ENCODE measurements at regions of chr1 and their contacts with region 1.

Region 1: DNA sequence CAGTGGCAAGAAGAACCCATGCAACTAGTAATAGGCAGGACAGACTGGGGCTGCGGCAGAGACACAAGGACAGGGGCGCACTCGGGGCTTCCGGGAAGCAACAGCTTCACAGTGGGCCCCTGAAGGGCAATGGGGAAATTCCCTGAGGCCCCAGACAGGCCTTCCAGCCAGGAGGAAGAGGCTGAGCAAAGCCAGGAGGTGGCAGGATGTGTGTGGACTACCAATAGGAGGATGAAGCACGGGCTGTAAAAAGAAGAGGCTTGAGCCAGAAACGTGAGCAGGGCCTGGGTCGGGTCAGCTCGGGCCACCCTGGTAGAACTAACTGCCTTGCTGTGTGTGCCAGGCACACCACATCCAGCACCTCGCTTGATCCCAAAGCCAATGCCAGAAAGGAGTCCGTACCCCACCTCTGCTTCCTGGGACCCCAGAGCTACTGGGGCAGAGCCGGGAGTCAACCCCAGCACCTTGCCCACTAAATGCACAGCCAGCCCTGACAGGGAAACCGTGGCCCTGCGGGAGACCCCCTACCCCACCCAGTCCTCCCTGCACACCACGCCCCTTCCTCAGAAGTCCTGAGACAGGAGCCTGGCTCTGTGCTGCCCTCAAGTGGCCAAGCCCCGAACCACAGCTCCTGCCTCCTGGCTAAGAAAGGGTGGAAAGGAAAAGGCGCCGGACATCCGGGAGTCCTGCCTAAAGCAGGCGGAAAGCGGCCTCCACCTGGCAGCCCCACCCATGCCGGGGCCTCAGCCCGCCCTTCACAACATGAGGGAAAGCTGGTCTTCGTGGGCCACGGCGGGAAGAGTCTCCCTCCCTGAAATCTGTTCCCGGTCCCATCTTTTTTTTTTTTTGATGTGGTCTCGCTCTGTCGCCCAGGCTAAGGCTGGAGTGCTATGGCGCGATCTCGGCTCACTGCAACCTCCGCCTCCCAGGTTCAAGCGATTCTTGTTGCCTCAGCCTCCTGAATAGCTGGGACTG is 33.7 kb downstream of the TTC39A start:
- DNase-seq: peak; percentile 80 to 91
- ATAC-seq: peak; percentile 80 to 93 (median 89)
- H3K4me3 ChIP-seq: peak overlapping the region; percentile 59
- H3K27ac ChIP-seq: no peak overlapping the region
- H3K4me1 ChIP-seq: no peaks in the 10 kb centered on the region
- H3K27me3 ChIP-seq: no peaks in the 10 kb centered on the region
- CTCF ChIP-seq: peak; percentile 93

Region 2: GRCh38 chr1:51224255-51224654 is 72.4 kb before region 1 on chr1:
- intact Hi-C with region 1: no loop called
- DNase-seq: no peak
- ATAC-seq: no peak
- H3K4me3 ChIP-seq: no peak overlapping the region
- H3K27ac ChIP-seq: no peak overlapping the region
- H3K4me1 ChIP-seq: no peaks in the 10 kb centered on the region
- H3K27me3 ChIP-seq: no peaks in the 10 kb centered on the region
- CTCF ChIP-seq: no peak

Region 3: GRCh38 chr1:51235673-51236530 is 60.8 kb before region 1 on chr1 and contains the start of gene RNF11:
- intact Hi-C with region 1: loop called in 1 of 2 experiments (anchors 5 kb)
- DNase-seq: peak; percentile 95 to 97
- ATAC-seq: peak; percentile 95 to 97 (median 96)
- H3K4me3 ChIP-seq: peak within 1 kb of the TSS; percentile 96
- H3K27ac ChIP-seq: peak within 1 kb of the TSS; percentile 97
- H3K4me1 ChIP-seq: peaks cover 28% of the 10 kb centered on the region
- H3K27me3 ChIP-seq: no peaks in the 10 kb centered on the region
- CTCF ChIP-seq: peak; percentile 9
- total RNA-seq, gene RNF11: 102 to 113 (median 107) TPM

Region 4: GRCh38 chr1:51341876-51342496 is 45.3 kb after region 1 on chr1:
- intact Hi-C with region 1: no loop called
- DNase-seq: no peak
- ATAC-seq: no peak
- H3K4me3 ChIP-seq: no peak overlapping the region
- H3K27ac ChIP-seq: no peak overlapping the region
- H3K4me1 ChIP-seq: peaks cover 9% of the 10 kb centered on the region
- H3K27me3 ChIP-seq: peaks cover 0 to 17% (median 5%) of the 10 kb centered on the region in 3 donors
- CTCF ChIP-seq: no peak

Region 5: DNA sequence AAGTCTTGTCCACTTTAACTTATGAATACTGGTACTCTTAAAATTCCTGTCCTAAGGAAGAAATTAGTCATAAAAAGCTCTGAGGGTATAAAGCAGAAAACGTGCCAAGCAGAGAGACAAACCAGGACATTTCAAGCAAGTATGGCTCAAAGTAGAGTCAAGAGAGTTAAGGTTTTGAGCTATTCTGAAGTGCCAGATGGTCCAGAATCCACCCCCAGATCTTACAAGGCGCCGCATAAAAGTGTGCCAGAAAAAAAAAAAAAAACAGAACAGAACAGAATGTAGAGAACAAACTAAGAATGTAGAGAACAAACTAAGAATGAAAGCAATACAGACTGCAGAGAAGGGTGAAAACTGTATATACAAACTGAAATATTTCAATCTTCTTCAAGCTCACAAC is 209.9 kb after region 1 on chr1:
- intact Hi-C with region 1: no loop called
- DNase-seq: no peak
- ATAC-seq: peak in 3 of 4 donors; percentile 58 to 66 (median 60)
- H3K4me3 ChIP-seq: peak overlapping the region; percentile 21
- H3K27ac ChIP-seq: no peak overlapping the region
- H3K4me1 ChIP-seq: peaks cover 31% of the 10 kb centered on the region
- H3K27me3 ChIP-seq: no peaks in the 10 kb centered on the region
- CTCF ChIP-seq: no peak